HAP-1 (cell line): ENCODE measurements at regions of chr11 and their contacts with region 1.

Region 1: GRCh38 chr11:70176940-70177689 is 26.0 kb upstream of the FADD start:
- DNase-seq: peak; percentile 29 to 80
- H3K4me3 ChIP-seq: no peak overlapping the region
- H3K4me1 ChIP-seq: no peaks in the 10 kb centered on the region
- H3K27me3 ChIP-seq: no peaks in the 10 kb centered on the region

Region 2: GRCh38 chr11:70082829-70083228 is 94.3 kb before region 1 on chr11:
- in situ Hi-C with region 1: loop called (anchors 10 kb)
- DNase-seq: peak in 1 of 2 experiments; percentile 3
- H3K4me3 ChIP-seq: no peak overlapping the region
- H3K4me1 ChIP-seq: no peaks in the 10 kb centered on the region
- H3K27me3 ChIP-seq: peaks cover 9% of the 10 kb centered on the region; the same call in 1 of the 2 replicates